HepG2 (cell line): ENCODE measurements at regions of chr19 and their contacts with region 1.

Region 1: GRCh38 chr19:55206664-55207500 is 2.4 kb downstream of the PTPRH start:
- DNase-seq: peak; percentile 93
- ATAC-seq: peak; percentile 89
- H3K4me3 ChIP-seq: peak overlapping the region; percentile 73 to 93 (median 82)
- H3K27ac ChIP-seq: peak overlapping the region; percentile 100
- H3K4me1 ChIP-seq: peaks cover 64% of the 10 kb centered on the region
- H3K27me3 ChIP-seq: no peaks in the 10 kb centered on the region; a peak in 1 of 5 replicates
- CTCF ChIP-seq: no peak
- EP300 ChIP-seq: peak in 1 of 2 experiments; percentile 61; a peak in 2 of 4 replicates
- POLR2A ChIP-seq: peak; percentile 71 to 79
- RAD21 ChIP-seq: 0 out of 2 replicates have a peak, but pooled peaks have one; percentile 20

Region 2: GRCh38 chr19:55117636-55118391 is 89.1 kb before region 1 on chr19 and contains the start of gene PPP1R12C:
- CTCF ChIA-PET with region 1: no interaction called
- POLR2A ChIA-PET with region 1: interaction called, 4 read pairs
- in situ Hi-C with region 1: no loop called
- intact Hi-C with region 1: loop called (anchors 1 kb)
- DNase-seq: peak; percentile 97
- ATAC-seq: peak; percentile 92
- H3K4me3 ChIP-seq: peak within 1 kb of the TSS; percentile 86 to 99 (median 98)
- H3K27ac ChIP-seq: peak within 1 kb of the TSS; percentile 47
- H3K4me1 ChIP-seq: peaks cover 43% of the 10 kb centered on the region
- H3K27me3 ChIP-seq: peaks cover 0 to 6% of the 10 kb centered on the region in 2 experiments; a peak in 2 of 5 replicates
- CTCF ChIP-seq: peak; percentile 12; the same call in 1 of the 2 replicates
- EP300 ChIP-seq: peak in 1 of 2 experiments; percentile 53; a peak in 1 of 4 replicates
- POLR2A ChIP-seq: peak; percentile 50 to 76; a peak in 3 of 4 replicates
- RAD21 ChIP-seq: no peak
- total RNA-seq, gene PPP1R12C: 13.0 and 29.7 TPM in 2 replicates

Region 3: GRCh38 chr19:55166530-55167268 is 40.2 kb before region 1 on chr19 and contains the start of gene DNAAF3:
- CTCF ChIA-PET with region 1: no interaction called
- POLR2A ChIA-PET with region 1: interaction called, 16 read pairs
- in situ Hi-C with region 1: no loop called
- intact Hi-C with region 1: no loop called
- DNase-seq: peak; percentile 97
- ATAC-seq: peak; percentile 97
- H3K4me3 ChIP-seq: peak within 1 kb of the TSS; percentile 50 to 78 (median 63)
- H3K27ac ChIP-seq: peak within 1 kb of the TSS; percentile 47
- H3K4me1 ChIP-seq: peaks cover 8% of the 10 kb centered on the region
- H3K27me3 ChIP-seq: peaks cover 0 to 7% of the 10 kb centered on the region in 2 experiments; a peak in 1 of 5 replicates
- CTCF ChIP-seq: no peak
- EP300 ChIP-seq: no peak; a peak in 1 of 4 replicates
- POLR2A ChIP-seq: no peak
- RAD21 ChIP-seq: no peak
- total RNA-seq, gene DNAAF3: 0.40 and 0.41 TPM in 2 replicates

Region 4: DNA sequence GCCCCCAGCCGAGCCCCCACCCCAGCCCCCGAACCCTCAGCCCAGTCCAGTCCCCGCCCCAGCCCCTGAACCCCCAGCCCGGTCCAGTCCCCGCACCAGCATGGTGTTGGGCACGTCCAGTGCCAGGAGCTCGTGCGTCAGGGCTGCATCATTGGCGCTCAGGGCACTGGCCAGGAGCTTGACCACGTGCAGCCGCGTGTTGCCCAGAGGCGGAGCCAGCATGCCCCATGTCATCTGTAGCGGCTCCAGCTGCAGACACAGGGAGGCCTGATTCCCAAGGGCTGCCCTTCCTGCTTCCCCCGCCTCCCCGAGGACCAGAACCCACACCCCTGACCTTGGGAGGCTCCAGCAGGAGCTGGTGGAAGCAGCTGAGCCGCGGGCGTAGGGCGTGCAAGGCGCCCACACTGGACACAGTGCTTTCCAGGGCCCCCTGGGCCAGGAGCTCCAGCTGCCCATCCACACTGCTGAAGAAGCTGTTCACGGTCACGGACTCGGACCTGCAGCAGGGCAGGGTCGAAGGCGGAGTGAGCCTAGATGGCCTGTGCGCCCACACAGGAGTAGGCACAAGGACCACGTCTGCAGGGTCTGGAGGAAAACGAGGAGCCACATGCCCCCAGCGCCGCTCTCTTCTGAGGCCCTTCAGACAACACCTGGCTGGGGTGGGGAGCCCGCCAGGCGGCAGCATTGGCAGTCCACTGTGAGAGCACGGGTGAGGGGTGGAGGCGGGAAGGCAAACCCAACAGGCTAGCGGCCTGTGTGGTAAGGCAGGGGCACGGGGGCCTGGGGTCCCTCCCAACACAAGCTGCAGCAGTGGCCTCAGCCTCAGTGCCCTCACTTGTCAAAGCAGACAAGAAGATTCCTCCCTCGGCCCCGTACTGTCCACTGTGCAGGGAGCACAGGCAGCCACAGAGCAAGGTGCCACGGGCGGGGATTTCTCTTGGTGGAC is 34.5 kb after region 1 on chr19:
- CTCF ChIA-PET with region 1: no interaction called
- POLR2A ChIA-PET with region 1: no interaction called
- in situ Hi-C with region 1: no loop called
- intact Hi-C with region 1: no loop called
- DNase-seq: no peak
- ATAC-seq: no peak
- H3K4me3 ChIP-seq: no peak overlapping the region
- H3K27ac ChIP-seq: no peak overlapping the region
- H3K4me1 ChIP-seq: no peaks in the 10 kb centered on the region
- H3K27me3 ChIP-seq: no peaks in the 10 kb centered on the region
- CTCF ChIP-seq: no peak
- EP300 ChIP-seq: no peak
- POLR2A ChIP-seq: no peak
- RAD21 ChIP-seq: no peak

Region 5: DNA sequence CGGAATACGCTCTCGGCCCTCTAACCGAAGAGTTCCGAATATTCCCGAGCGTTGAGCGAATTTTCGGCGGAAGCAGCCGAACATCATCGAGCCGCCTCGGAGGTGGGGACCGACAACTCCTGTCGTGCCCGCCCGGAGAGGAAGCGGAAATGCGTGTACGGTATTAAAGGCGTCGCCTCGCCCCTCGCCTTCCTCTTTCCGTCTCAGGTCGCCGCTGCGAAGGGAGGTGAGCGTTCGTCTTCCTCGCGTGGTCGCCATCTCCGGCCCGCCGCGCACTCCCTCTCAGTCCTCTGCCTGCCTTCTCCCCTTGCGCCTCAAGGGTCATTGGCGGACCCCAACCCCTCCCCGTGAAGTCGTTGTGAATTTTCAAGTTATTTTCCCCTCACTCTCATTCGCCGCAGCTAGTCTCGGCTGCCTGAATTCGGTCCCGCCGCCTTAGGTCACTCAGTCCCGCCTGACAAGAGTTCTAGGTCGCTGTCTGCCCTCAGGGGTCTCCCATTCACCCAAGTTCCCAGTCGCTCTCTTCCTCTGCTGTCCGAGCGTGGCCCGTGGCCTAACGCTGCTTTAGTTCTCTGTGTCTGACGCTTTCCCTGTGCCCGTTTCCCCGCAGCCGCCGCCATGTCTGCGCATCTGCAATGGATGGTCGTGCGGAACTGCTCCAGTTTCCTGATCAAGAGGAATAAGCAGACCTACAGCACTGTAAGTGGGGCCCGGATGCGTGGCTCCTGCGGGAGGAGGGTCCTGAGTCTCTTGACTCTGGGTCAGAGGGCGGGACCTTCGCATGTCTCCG is 179.1 kb after region 1 on chr19 and contains the start of gene RPL28:
- CTCF ChIA-PET with region 1: no interaction called
- POLR2A ChIA-PET with region 1: no interaction called
- in situ Hi-C with region 1: no loop called
- intact Hi-C with region 1: loop called (anchors 1 kb)
- DNase-seq: peak; percentile 96
- ATAC-seq: peak; percentile 77
- H3K4me3 ChIP-seq: peak within 1 kb of the TSS; percentile 86 to 100 (median 89)
- H3K27ac ChIP-seq: peak within 1 kb of the TSS; percentile 92
- H3K4me1 ChIP-seq: peaks cover 42% of the 10 kb centered on the region
- H3K27me3 ChIP-seq: no peaks in the 10 kb centered on the region; a peak in 1 of 5 replicates
- CTCF ChIP-seq: no peak; the same call in 1 of the 2 replicates
- EP300 ChIP-seq: no peak
- POLR2A ChIP-seq: peak; percentile 99 to 100
- RAD21 ChIP-seq: no peak
- total RNA-seq, gene RPL28: 105 and 149 TPM in 2 replicates

Region 6: DNA sequence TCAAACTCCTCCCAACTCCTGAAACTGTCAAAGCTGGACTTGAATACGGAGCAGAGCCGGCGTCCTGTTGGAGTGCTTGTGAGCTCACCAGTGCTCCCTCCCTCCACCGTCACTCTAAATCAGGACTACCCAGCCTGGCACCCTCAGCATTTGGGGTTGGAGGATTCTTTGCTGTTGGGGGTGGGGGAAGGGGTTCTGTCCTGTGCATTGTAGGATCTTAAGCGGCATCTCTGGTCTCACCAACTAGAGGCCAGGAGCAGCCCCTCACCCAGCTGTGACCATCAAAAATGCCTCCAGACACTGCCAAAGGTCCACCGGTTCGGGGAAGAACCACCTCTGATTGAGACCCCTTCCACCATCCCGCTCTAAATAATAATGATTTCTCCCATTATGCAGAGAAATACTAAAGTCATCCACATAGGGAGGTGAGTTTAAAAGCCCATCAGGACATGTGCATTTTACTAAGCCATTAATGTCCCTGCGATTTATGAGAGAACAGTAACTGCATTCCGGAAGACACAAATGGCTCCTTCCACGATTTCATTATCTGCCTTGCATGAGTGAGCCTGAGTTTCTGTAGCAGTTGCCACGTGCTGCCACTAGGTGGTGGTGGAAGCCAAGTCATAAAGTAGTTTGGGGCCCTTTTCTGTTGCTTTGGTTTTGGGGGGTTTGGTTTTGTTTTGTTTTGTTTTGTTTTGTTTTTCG is 1896.8 kb after region 1 on chr19:
- CTCF ChIA-PET with region 1: no interaction called
- POLR2A ChIA-PET with region 1: no interaction called
- in situ Hi-C with region 1: no loop called
- intact Hi-C with region 1: no loop called
- DNase-seq: peak; percentile 47
- ATAC-seq: peak; percentile 66
- H3K4me3 ChIP-seq: peak overlapping the region; percentile 9 to 60 (median 18); a peak in 4 of 6 replicates
- H3K27ac ChIP-seq: no peak overlapping the region
- H3K4me1 ChIP-seq: peaks cover 15% of the 10 kb centered on the region; the same call in 1 of the 2 replicates
- H3K27me3 ChIP-seq: no peaks in the 10 kb centered on the region
- CTCF ChIP-seq: peak; percentile 90
- EP300 ChIP-seq: no peak
- POLR2A ChIP-seq: no peak
- RAD21 ChIP-seq: peak; percentile 77